Mammary epithelial cell (primary cell): ENCODE measurements at regions of chr19 and their contacts with region 1.

Region 1: DNA sequence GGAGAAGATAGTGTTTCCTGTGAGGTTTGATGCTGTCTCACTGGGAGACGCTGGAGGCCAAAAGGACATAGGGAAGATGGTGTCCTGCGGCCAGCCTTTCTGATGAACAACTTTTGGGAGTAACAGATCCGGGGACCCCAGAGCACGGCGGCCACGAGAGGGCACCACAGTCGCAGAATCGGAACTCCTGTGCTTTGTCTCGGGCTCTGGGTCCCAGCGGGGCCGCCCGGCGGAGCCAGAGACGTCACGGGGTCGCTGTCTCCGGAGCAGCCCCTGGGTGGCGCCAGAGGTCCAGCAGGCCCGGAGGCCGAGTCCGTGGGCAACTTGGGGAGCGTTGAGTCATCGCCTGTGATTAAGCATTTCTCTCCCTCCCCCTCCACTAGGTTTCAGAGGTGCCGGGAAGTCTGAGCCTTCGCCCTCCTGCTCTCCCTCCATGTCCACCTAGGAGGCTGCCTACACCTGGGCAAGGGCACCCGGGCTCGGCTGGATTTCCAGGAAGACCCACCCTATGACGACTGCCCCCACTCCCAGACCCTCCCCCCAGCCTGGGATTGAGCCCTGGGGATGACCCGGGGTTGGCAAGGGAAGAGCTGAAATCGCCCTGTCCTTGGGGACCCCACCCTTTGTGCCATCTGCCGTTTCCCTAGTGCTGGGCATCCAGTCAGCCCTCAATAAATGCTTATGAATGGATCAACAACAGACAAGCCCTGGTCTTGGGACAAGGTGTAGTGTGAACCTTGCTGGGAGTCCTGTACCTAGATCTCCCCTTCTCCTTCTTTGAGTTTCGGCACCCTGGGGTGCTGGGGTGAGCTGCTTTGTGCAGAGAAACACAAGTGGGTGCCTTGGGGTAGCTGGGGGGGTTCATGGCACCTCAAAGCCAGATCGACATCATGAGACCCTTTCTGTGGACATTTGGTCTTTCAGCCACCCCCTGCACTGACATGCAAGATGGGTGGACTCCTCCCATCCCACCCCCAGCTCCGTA is 3.4 kb downstream of the NANOS3 start:
- DNase-seq: peak; percentile 94
- H3K4me3 ChIP-seq: peak overlapping the region in 1 of 3 experiments; percentile 15
- H3K27ac ChIP-seq: peak overlapping the region; percentile 59
- H3K4me1 ChIP-seq: peaks cover 38% of the 10 kb centered on the region
- H3K27me3 ChIP-seq: no peaks in the 10 kb centered on the region
- CTCF ChIP-seq: peak; percentile 95 to 99

Region 2: DNA sequence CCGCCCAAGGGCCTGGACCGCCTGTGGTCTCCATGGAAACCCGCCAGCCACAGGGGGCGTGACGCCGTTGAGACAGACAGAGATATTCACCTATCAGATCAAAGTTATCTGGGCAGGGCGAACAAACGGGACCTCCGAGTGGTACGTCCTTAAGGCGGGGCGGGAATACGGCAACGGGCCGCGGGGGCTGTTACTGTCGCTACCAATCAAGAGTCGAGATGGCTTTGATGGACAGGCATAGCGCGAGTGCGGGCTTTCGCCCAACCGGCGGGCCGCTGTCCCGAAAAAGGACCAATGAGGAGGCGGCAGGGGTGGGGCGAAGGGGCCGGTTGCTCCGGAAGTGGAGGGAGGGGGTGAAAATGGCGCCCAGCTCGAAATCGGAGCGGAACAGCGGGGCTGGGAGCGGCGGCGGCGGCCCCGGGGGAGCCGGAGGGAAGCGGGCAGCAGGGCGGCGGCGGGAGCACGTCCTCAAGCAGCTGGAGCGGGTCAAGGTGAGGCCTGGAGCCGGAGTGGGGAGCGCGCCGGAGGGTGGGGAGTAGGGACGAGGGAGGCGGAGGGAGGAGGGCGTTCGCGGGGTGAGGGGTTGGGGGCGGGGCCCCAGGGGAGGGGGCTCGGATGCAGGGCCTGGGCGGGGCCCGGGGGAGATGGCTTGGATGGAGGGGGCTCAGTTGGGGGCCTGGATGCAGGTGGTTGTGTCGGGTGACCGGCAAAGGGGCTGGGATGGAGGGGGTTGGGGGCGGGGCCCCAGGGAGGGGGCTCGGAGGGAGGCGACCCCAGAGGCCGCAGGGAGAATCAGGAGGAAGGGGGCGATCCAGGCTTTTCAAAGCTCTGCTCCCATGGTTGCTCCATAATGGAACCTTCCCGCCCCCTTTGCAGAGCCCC is 72.0 kb after region 1 on chr19 and contains the start of gene DCAF15:
- CTCF ChIA-PET with region 1: no interaction called
- dilution Hi-C with region 1: loop called (anchors 5 kb)
- in situ Hi-C with region 1: no loop called
- intact Hi-C with region 1: loop called (anchors 1 kb)
- DNase-seq: peak; percentile 99
- H3K4me3 ChIP-seq: peak within 1 kb of the TSS; percentile 83 to 86 (median 84)
- H3K27ac ChIP-seq: peak within 1 kb of the TSS; percentile 30
- H3K4me1 ChIP-seq: peaks cover 11% of the 10 kb centered on the region
- H3K27me3 ChIP-seq: no peaks in the 10 kb centered on the region
- CTCF ChIP-seq: no peak
- total RNA-seq, gene DCAF15: 15.2 to 31.3 TPM

Region 3: DNA sequence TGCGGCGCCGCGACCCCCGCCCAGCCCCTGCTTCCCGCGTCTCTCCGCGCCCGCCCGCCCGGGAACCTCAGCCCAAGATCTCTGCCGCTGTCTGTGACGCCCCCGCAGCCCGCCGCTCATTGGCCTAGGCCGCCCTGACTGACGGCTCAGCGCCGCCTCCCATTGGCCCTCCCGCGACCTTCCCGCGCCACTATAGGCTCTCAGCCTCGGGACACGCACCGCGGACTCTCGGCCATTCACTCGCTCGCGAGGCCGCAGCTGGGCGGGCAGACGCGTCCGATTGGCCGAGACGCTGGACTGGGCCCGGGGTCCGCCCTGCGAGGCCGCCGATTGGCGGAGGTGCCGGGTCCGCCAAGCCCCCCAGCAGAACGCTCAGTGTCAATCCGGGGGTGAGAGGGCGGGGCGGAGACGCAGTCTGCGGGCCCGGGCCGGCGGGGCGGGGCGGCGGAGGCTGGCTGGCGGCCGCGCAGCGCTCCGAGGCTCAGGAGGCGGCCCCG is 237.4 kb after region 1 on chr19 and contains the start of gene PRKACA:
- CTCF ChIA-PET with region 1: no interaction called
- dilution Hi-C with region 1: no loop called
- in situ Hi-C with region 1: no loop called
- intact Hi-C with region 1: loop called (anchors 1 kb)
- DNase-seq: peak; percentile 100
- H3K4me3 ChIP-seq: peak within 1 kb of the TSS; percentile 83 to 87 (median 87)
- H3K27ac ChIP-seq: peak within 1 kb of the TSS; percentile 27
- H3K4me1 ChIP-seq: peaks cover 36% of the 10 kb centered on the region
- H3K27me3 ChIP-seq: no peaks in the 10 kb centered on the region
- CTCF ChIP-seq: no peak
- total RNA-seq, gene PRKACA: 44.0 to 82.1 TPM

Region 4: GRCh38 chr19:14347999-14348889 is 467.9 kb after region 1 on chr19:
- CTCF ChIA-PET with region 1: no interaction called
- dilution Hi-C with region 1: loop called (anchors 10 kb)
- in situ Hi-C with region 1: no loop called
- intact Hi-C with region 1: loop called (anchors 2 kb)
- DNase-seq: peak; percentile 26
- H3K4me3 ChIP-seq: peak overlapping the region in 1 of 3 experiments; percentile 22
- H3K27ac ChIP-seq: no peak overlapping the region
- H3K4me1 ChIP-seq: no peaks in the 10 kb centered on the region
- H3K27me3 ChIP-seq: peaks cover 2% of the 10 kb centered on the region
- CTCF ChIP-seq: peak; percentile 77 to 98

Region 5: GRCh38 chr19:14419106-14419813 is 538.9 kb after region 1 on chr19 and contains the start of gene DDX39A:
- CTCF ChIA-PET with region 1: no interaction called
- dilution Hi-C with region 1: loop called (anchors 5 kb)
- in situ Hi-C with region 1: loop called in 1 of 2 experiments (anchors 25 kb)
- intact Hi-C with region 1: no loop called
- DNase-seq: peak; percentile 99
- H3K4me3 ChIP-seq: peak within 1 kb of the TSS; percentile 80 to 98 (median 94)
- H3K27ac ChIP-seq: peak within 1 kb of the TSS; percentile 80
- H3K4me1 ChIP-seq: peaks cover 17% of the 10 kb centered on the region
- H3K27me3 ChIP-seq: no peaks in the 10 kb centered on the region
- CTCF ChIP-seq: no peak
- total RNA-seq, gene DDX39A: 34.0 to 74.4 TPM